Activated T-helper 1 cell treated with anti-CD3 and anti-CD28 coated beads, Interleukin-12 subunit alpha, Interleukin-12 subunit beta, Interleukin-2, Interleukin-4 antibody, amounts not matched to agents 30 ng/mL and 10 ng/mL and 1 ng/mL, durations not matched to agents 14 hours and 24 hours and 36 hours (primary cell): ENCODE measurements at regions of chr5 and their contacts with region 1.

Region 1: DNA sequence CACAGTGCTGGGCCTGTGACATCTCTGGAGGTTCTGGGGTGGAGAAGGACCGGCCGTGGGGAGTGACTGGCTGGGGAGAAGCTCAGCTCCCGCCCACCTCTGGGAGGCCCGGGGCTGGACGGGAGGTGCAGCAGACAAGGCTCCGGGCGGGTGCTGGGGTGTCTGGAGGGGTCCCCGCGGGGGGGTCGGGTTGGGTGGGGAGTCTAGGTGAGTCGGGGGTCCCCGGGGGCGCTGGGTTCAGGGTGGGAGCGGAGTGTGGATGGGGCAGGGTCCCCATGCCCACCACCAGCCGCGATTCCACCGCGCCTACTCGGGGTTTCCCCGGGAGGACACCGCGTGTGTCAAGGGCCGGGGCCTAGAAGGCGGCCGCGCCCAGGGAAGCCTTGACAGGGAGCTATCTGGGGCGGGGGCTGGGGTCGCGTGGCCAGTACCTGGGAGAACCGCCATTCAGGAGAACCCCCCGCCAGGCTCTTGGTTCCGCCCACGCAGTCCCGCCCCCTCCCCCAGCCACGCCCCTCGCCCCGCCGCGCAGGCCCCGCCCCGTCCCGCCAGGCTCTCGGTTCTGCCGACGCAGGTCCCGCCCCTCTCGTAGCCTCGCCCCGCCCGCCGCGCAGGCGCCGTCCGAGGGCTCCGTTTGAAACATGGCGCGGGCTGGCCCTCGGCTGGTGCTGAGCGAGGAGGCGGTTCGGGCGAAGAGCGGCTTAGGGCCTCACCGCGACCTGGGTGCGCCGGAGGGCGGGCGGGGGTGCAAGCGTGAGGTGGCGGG is at the start of gene CEP72:
- DNase-seq: peak; percentile 87
- H3K4me3 Mint-ChIP-seq: peak within 1 kb of the TSS; percentile 94
- H3K27ac Mint-ChIP-seq: peak within 1 kb of the TSS; percentile 90
- H3K4me1 Mint-ChIP-seq: peaks cover 54% of the 10 kb centered on the region
- H3K27me3 Mint-ChIP-seq: no peaks in the 10 kb centered on the region
- total RNA-seq, gene CEP72: 32.4 and 35.7 TPM in 2 replicates

Region 2: DNA sequence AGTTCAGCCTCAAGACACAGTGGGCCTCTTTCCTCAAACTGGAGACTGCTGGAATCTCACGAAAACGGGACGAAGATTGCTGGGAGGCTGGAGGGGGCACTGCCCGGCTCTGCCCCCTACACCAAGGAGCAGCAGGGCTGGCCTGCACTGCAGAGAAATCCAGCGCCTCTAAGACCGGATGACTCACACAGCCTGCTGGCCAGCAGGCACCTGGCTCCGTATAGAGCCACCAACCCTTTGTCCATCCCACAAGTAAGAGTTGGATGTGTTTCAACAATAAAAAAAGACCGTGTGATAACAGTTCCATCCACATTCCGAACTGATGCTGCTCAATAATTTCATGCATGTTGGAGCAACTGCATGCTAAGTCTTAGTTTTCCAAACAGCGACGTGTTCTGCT is 405.5 kb before region 1 on chr5:
- intact Hi-C with region 1: no loop called
- DNase-seq: no peak
- H3K4me3 Mint-ChIP-seq: no peak overlapping the region
- H3K27ac Mint-ChIP-seq: no peak overlapping the region
- H3K4me1 Mint-ChIP-seq: peaks cover 17% of the 10 kb centered on the region
- H3K27me3 Mint-ChIP-seq: no peaks in the 10 kb centered on the region

Region 3: DNA sequence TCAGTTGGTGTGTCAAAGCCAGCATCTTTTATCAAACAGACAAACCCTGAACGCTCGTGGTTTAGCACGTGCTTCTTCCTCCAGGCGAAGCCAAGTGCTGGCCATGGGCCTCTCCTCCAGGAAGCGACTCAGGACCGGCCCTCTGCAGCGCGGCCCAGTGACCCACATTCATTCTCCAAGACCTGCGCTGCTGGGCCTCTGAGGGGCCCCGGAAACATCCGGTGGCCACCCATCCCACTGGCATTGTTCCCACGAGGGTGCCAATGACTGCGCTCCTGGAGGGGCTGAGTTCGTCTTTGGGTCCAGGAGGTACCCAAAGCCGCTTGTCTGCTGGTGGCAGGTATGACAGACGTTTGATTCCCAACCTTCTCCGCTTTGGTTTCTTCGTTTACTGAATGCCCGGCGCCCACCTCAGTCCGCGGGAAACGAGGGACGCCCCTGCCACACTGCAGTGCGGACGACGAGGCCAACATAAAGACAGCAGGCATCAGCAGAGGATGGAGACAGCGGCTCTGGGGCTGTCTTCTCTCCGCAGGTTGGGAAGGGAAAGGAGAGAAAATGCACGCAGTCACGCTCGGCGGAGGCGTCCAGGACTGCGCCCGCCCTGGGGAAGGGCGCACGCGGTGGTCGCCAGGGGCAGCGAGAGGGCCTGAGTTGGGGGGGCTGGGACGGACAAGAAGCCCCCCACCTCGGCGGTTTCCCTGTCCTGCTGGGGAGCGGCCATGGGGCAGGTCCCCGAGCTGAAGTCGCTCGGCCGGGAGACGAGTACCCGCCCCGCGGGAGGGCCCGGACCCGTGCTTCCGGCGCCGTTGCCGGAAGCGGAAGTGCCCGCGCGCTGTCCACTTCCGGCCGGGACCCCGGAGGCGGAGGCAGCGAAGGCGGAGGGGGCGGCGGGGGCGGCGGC is 169.3 kb before region 1 on chr5 and contains the start of gene EXOC3:
- intact Hi-C with region 1: loop called (anchors 10 kb)
- DNase-seq: peak; percentile 76
- H3K4me3 Mint-ChIP-seq: peak within 1 kb of the TSS; percentile 97
- H3K27ac Mint-ChIP-seq: peak within 1 kb of the TSS; percentile 96
- H3K4me1 Mint-ChIP-seq: peaks cover 19% of the 10 kb centered on the region
- H3K27me3 Mint-ChIP-seq: peaks cover 3% of the 10 kb centered on the region
- total RNA-seq, gene EXOC3: 59.6 and 62.0 TPM in 2 replicates

Region 4: DNA sequence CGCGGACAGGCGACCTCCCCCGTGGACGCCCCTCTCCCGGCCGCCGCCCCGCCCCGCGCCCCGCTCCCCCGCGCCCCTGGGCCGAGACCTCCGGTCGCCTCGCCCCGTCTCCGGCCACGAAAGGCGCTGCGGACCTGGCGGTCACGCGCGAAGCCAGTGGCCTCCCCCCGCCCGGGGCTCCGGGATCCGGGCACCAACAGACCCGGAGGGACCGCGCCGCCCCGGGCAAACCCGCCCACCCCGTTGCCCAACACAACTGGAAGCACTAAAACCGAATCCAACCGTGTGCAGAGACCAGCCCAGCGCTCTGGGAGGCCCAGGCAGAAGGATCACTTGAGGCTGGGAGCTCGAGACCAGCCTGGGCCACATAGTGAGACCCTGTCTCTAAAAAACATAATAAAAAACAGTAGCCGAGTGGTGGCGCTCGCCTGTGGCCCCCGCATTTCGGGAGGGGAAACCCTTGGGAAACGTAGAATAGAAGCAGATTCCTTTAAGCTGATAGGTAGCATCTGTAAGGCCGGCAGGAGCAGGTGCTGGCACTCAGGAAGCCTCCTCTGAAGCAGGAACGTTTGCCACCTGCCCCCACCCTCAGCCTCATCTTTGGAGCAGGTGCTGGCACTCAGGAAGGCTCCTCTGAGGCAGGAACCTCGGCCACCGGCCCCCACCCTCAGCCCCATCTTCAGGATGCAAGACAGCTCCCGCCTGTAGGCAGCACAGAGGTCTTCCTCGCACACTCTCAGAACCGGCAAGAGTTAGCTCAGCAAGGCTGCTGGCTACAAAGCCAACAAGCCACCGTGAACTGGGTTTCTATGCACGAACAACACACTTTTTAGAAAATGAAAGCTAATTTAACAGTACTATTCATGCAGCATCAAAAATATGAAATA is 83.0 kb before region 1 on chr5:
- intact Hi-C with region 1: loop called (anchors 2 kb)
- DNase-seq: no peak
- H3K4me3 Mint-ChIP-seq: no peak overlapping the region
- H3K27ac Mint-ChIP-seq: no peak overlapping the region
- H3K4me1 Mint-ChIP-seq: peaks cover 29% of the 10 kb centered on the region
- H3K27me3 Mint-ChIP-seq: peaks cover 47% of the 10 kb centered on the region

Region 5: GRCh38 chr5:691817-692528 is 80.1 kb after region 1 on chr5:
- intact Hi-C with region 1: loop called (anchors 2 kb)
- DNase-seq: no peak
- H3K4me3 Mint-ChIP-seq: peak overlapping the region; percentile 54
- H3K27ac Mint-ChIP-seq: no peak overlapping the region
- H3K4me1 Mint-ChIP-seq: no peaks in the 10 kb centered on the region
- H3K27me3 Mint-ChIP-seq: no peaks in the 10 kb centered on the region

Region 6: DNA sequence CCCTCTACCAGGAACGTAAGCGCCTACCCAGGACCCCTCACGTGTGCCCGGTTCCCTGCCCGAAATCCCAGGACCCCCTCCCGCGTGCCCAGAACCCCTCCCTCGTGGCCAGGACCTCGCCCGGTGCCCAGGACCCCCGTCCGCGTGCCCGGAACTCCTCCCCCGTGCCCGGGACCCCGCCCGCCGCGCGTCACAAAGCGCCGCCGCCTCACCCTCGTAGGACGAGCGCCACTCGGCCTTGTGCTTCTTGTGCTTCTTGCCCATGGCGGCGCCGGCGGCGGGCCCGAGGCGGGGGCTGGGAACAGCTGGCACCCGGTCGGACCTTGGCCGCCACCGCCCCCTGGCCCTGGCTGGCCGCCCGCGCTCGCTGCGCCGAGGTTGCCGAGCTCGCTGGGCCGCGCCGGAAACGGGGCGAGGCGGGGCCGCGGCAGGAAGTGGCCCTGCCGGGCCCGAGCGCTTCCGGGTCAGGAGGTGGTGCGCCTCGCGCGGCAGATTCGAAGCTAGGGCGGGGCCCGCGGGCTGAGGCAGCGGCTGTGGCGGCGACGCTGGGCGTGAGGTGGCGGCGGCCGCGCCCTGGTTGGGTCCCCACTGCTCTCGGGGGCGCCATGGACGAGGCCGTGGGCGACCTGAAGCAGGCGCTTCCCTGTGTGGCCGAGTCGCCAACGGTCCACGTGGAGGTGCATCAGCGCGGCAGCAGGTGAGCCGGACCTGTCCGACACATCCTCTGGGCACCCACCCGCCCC is 280.7 kb after region 1 on chr5 and contains the starts of genes BRD9 and TRIP13:
- intact Hi-C with region 1: loop called (anchors 1 kb)
- DNase-seq: peak; percentile 84
- H3K4me3 Mint-ChIP-seq: peak within 1 kb of the TSS; percentile 92
- H3K27ac Mint-ChIP-seq: peak within 1 kb of the TSS; percentile 90
- H3K4me1 Mint-ChIP-seq: peaks cover 26% of the 10 kb centered on the region
- H3K27me3 Mint-ChIP-seq: no peaks in the 10 kb centered on the region
- total RNA-seq, gene BRD9: 77.8 and 81.6 TPM in 2 replicates
- total RNA-seq, gene TRIP13: 37.2 and 38.4 TPM in 2 replicates

Region 7: GRCh38 chr5:989961-990530 is 378.1 kb after region 1 on chr5:
- intact Hi-C with region 1: no loop called
- DNase-seq: no peak
- H3K4me3 Mint-ChIP-seq: no peak overlapping the region
- H3K27ac Mint-ChIP-seq: no peak overlapping the region
- H3K4me1 Mint-ChIP-seq: no peaks in the 10 kb centered on the region
- H3K27me3 Mint-ChIP-seq: peaks cover 6% of the 10 kb centered on the region